ENCODE measurements at regions of chr9 and their contacts with region 1.

Region 1: DNA sequence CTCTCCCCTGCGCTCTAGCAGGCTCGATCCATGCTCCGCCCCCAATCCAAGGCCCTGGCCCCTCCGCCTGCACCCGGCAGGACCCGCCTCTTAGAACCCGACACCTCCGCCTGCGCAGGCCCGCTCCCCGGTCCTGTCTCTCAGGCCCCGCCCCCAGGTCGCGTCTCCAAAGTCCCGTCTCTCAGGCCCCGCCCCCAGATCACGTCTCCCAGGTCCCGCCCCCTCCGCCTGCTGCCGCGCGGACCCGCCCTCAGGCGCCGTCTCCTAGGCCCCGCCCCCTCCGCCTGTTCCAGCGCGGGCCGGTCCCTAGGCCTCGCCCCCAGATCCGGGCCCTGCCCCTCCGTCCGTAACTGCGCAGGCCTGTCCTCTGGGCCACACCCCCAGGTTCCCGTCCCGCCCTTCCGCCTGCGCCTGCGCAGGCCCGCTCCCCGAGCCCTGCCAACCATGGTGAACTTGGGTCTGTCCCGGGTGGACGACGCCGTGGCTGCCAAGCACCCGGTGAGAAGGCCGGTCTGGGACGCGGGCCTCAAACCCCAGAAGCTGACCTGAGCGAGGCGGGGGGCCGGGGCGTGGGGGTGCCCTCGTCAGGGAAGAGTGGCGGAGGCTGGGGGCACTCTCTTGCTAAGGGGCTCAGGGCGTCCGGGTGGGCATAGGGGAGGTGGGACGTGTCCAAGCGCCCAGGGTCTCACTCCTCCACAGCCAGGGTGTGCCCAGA is at the start of gene TMEM141:
- DNase-seq: peak; percentile 97 to 99 (median 99)
- H3K4me3 ChIP-seq: peak within 1 kb of the TSS; percentile 50 to 81 (median 55)
- H3K4me3 Mint-ChIP-seq: peak within 1 kb of the TSS; percentile 75 to 86
- H3K27ac ChIP-seq: peak within 1 kb of the TSS; percentile 81 to 82
- H3K27ac Mint-ChIP-seq: peak within 1 kb of the TSS; percentile 83 to 96 (median 93)
- H3K4me1 ChIP-seq: peaks cover 29 to 35% of the 10 kb centered on the region in 2 donors
- H3K4me1 Mint-ChIP-seq: peaks cover 25% of the 10 kb centered on the region
- H3K27me3 ChIP-seq: peaks cover 0 to 7% of the 10 kb centered on the region in 2 donors
- H3K27me3 Mint-ChIP-seq: peaks cover 5 to 17% (median 9%) of the 10 kb centered on the region in 3 donors
- CTCF ChIP-seq: no peak
- polyA plus RNA-seq, gene TMEM141: 33.1 to 47.2 (median 39.2) TPM

Region 2: GRCh38 chr9:136807281-136808074 is 16.4 kb after region 1 on chr9 and contains the start of gene RABL6:
- intact Hi-C with region 1: loop called in 1 of 2 experiments (anchors 2 kb)
- DNase-seq: peak; percentile 61 to 75 (median 67)
- H3K4me3 ChIP-seq: peak within 1 kb of the TSS; percentile 74 to 92 (median 87)
- H3K4me3 Mint-ChIP-seq: peak within 1 kb of the TSS; percentile 86 to 89
- H3K27ac ChIP-seq: peak within 1 kb of the TSS; percentile 72 to 84
- H3K27ac Mint-ChIP-seq: peak within 1 kb of the TSS; percentile 80 to 93 (median 88)
- H3K4me1 ChIP-seq: peaks cover 21 to 35% of the 10 kb centered on the region in 2 donors
- H3K4me1 Mint-ChIP-seq: peaks cover 28% of the 10 kb centered on the region
- H3K27me3 ChIP-seq: peaks cover 0 to 2% of the 10 kb centered on the region in 2 donors
- H3K27me3 Mint-ChIP-seq: peaks cover 1 to 8% (median 3%) of the 10 kb centered on the region in 3 donors
- CTCF ChIP-seq: no peak
- polyA plus RNA-seq, gene RABL6: 6.7 to 30.9 (median 8.1) TPM

Region 3: DNA sequence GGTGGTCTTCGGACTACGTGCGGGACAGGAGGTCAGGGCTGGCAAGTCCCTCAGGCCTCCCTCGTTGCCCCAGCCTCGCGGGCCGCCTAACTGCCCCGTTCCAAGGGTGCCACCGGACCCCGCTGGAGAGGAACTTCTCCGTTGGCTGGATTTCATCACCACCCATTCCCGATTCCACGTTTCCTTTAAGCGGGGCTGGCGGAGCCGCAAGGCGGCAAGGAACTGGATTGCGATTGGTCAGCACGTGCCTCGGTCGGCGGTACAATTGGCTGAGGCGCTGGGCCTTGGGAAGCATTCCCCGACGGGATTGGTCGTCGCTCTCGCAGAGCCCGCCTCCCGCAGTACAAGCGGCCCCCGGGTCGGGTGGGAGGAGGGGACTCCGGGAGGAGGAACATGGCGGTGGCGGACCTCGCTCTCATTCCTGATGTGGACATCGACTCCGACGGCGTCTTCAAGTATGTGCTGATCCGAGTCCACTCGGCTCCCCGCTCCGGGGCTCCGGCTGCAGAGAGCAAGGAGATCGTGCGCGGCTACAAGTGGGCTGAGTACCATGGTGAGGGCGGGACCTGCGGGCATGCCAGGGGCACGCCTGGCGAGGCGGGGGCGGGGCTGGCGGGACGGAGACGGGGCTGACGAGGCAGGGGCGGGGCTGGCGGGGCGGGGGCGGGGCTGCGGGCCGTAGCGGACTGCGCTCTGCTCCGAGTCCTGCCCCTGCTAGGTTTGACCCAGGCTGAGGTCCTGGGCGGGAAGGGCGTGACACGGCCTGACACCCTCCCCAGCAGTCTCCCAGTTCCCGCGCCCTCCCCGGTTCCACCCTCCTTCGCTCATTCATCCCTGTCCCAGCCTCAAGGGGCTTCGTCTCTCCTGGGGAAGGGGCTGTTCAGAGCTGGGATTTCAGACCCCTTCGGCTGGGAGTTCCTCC is 58.2 kb after region 1 on chr9 and contains the start of gene PHPT1:
- intact Hi-C with region 1: loop called in 1 of 2 experiments (anchors 5 kb)
- DNase-seq: peak; percentile 98
- H3K4me3 ChIP-seq: peak within 1 kb of the TSS; percentile 74 to 93 (median 76)
- H3K4me3 Mint-ChIP-seq: peak within 1 kb of the TSS; percentile 92 to 97
- H3K27ac ChIP-seq: peak within 1 kb of the TSS; percentile 31 to 73
- H3K27ac Mint-ChIP-seq: peak within 1 kb of the TSS; percentile 84 to 97 (median 96)
- H3K4me1 ChIP-seq: peaks cover 21 to 34% of the 10 kb centered on the region in 2 donors
- H3K4me1 Mint-ChIP-seq: peaks cover 20% of the 10 kb centered on the region
- H3K27me3 ChIP-seq: peaks cover 12 to 24% of the 10 kb centered on the region in 2 donors
- H3K27me3 Mint-ChIP-seq: peaks cover 24 to 33% (median 24%) of the 10 kb centered on the region in 3 donors
- CTCF ChIP-seq: no peak
- polyA plus RNA-seq, gene PHPT1: 70.0 to 163 (median 94.3) TPM

Region 4: DNA sequence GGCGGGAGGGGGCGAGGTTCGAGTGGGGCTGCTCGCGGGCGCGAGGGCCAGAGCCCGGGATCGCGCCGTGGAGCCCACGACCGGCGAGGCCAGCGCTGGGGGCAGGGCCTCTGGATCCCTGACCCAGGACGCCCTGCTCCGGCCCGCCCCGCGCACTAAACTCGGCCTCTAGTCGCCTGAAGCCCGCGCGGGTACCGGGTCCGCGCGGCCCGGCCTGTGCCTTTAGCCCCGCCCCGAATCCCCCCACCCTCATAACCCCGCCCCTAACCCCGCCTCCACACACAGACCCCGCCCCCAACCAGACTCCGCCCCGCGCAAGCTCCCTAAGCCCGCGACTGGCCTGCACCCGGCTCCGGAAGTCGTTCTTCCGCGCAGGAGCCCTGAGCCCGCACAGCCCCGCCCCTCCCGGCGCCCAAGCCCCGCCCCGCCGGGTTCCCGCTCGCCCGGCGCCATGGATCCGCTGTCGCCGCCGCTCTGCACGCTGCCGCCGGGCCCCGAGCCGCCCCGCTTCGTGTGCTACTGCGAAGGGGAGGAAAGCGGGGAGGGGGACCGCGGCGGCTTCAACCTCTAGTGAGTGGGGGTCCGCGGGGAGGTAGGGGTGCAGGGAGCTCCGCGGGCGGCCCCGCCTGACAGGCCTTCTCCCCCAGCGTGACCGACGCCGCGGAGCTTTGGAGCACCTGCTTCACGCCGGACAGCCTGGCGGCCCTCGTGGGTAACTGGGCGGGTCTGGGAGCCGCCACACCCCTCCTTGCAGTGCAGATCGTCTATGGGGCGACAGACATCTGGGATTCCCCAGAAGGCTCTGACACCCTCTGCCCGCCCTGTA is 201.1 kb after region 1 on chr9 and contains the start of gene PAXX:
- intact Hi-C with region 1: loop called in 1 of 2 experiments (anchors 2 kb)
- DNase-seq: peak; percentile 84 to 88 (median 84)
- H3K4me3 ChIP-seq: peak within 1 kb of the TSS; percentile 67 to 88 (median 85)
- H3K4me3 Mint-ChIP-seq: peak within 1 kb of the TSS; percentile 81 to 89
- H3K27ac ChIP-seq: peak within 1 kb of the TSS; percentile 64 to 79
- H3K27ac Mint-ChIP-seq: peak within 1 kb of the TSS; percentile 79 to 93 (median 89)
- H3K4me1 ChIP-seq: peaks cover 40 to 57% of the 10 kb centered on the region in 2 donors
- H3K4me1 Mint-ChIP-seq: peaks cover 40% of the 10 kb centered on the region
- H3K27me3 ChIP-seq: peaks cover 0 to 38% of the 10 kb centered on the region in 2 donors
- H3K27me3 Mint-ChIP-seq: peaks cover 29 to 55% (median 53%) of the 10 kb centered on the region in 3 donors
- CTCF ChIP-seq: no peak
- polyA plus RNA-seq, gene PAXX: 35.3 to 92.9 (median 40.7) TPM

Region 5: DNA sequence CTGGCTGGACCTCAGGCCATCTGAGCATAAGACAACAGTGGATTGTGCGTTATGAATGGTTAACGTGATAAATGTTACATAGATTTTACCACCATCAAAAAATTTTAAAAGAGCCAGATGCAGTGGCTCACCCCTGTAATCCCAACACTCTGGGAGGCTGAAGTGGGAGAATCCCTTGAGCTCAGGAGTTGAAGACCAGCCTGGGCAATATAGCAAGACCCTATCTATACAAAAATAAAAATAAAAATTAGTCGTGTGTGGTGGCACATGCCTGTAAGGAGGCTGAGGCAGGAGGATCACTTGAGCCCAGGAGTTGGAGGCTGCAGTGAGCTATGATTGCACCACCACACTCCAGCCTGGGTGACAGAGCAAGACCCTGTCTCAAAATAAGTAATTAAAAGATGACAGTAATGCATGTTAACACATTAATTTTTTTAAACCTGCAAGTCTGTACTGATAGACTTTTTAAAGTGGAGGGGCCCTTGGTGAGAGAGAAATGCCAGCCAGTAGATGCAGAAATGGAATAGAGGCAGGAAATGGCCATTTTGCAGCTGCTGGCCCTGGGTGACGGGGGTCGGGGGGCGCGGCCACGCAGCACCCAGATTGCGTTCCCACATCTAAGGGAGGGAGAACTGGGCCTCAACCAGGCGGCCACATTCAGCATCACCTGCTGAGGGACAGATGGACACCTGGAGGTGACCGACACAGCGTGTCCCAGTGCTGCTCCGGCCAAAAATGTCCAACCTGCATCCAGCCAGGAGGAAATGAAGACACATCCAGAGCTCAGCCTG is 211.4 kb after region 1 on chr9:
- intact Hi-C with region 1: no loop called
- DNase-seq: no peak
- H3K4me3 ChIP-seq: no peak overlapping the region
- H3K4me3 Mint-ChIP-seq: no peak overlapping the region
- H3K27ac ChIP-seq: no peak overlapping the region
- H3K27ac Mint-ChIP-seq: no peak overlapping the region
- H3K4me1 ChIP-seq: peaks cover 47 to 48% of the 10 kb centered on the region in 2 donors
- H3K4me1 Mint-ChIP-seq: peaks cover 48% of the 10 kb centered on the region
- H3K27me3 ChIP-seq: peaks cover 0 to 6% of the 10 kb centered on the region in 2 donors
- H3K27me3 Mint-ChIP-seq: peaks cover 13 to 18% (median 13%) of the 10 kb centered on the region in 3 donors
- CTCF ChIP-seq: no peak

Region 6: GRCh38 chr9:137034863-137035761 is 244.0 kb after region 1 on chr9:
- intact Hi-C with region 1: loop called (anchors 1 to 5 kb)
- DNase-seq: peak; percentile 78 to 84 (median 84)
- H3K4me3 ChIP-seq: peak overlapping the region; percentile 0 to 74 (median 29)
- H3K4me3 Mint-ChIP-seq: peak overlapping the region; percentile 78 to 89
- H3K27ac ChIP-seq: peak overlapping the region; percentile 71 to 83
- H3K27ac Mint-ChIP-seq: peak overlapping the region; percentile 86 to 92 (median 90)
- H3K4me1 ChIP-seq: peaks cover 45 to 57% of the 10 kb centered on the region in 2 donors
- H3K4me1 Mint-ChIP-seq: peaks cover 37% of the 10 kb centered on the region
- H3K27me3 ChIP-seq: no peaks in the 10 kb centered on the region
- H3K27me3 Mint-ChIP-seq: no peaks in the 10 kb centered on the region
- CTCF ChIP-seq: peak; percentile 90

Region 7: GRCh38 chr9:137070201-137070905 is 279.3 kb after region 1 on chr9 and contains the start of gene SAPCD2:
- intact Hi-C with region 1: loop called in 1 of 2 experiments (anchors 10 kb)
- DNase-seq: peak; percentile 90 to 94 (median 91)
- H3K4me3 ChIP-seq: peak within 1 kb of the TSS; percentile 2 to 71 (median 39)
- H3K4me3 Mint-ChIP-seq: peak within 1 kb of the TSS; percentile 75 to 91
- H3K27ac ChIP-seq: peak within 1 kb of the TSS; percentile 53 to 56
- H3K27ac Mint-ChIP-seq: peak within 1 kb of the TSS; percentile 77 to 96 (median 89)
- H3K4me1 ChIP-seq: peaks cover 41 to 71% of the 10 kb centered on the region in 2 donors
- H3K4me1 Mint-ChIP-seq: peaks cover 61% of the 10 kb centered on the region
- H3K27me3 ChIP-seq: peaks cover 0 to 5% of the 10 kb centered on the region in 2 donors
- H3K27me3 Mint-ChIP-seq: peaks cover 0 to 3% (median 1%) of the 10 kb centered on the region in 3 donors
- CTCF ChIP-seq: no peak
- polyA plus RNA-seq, gene SAPCD2: 0.03 to 3.1 (median 1.7) TPM